ENCODE measurements at regions of chr3 and their contacts with region 1.

Region 1: DNA sequence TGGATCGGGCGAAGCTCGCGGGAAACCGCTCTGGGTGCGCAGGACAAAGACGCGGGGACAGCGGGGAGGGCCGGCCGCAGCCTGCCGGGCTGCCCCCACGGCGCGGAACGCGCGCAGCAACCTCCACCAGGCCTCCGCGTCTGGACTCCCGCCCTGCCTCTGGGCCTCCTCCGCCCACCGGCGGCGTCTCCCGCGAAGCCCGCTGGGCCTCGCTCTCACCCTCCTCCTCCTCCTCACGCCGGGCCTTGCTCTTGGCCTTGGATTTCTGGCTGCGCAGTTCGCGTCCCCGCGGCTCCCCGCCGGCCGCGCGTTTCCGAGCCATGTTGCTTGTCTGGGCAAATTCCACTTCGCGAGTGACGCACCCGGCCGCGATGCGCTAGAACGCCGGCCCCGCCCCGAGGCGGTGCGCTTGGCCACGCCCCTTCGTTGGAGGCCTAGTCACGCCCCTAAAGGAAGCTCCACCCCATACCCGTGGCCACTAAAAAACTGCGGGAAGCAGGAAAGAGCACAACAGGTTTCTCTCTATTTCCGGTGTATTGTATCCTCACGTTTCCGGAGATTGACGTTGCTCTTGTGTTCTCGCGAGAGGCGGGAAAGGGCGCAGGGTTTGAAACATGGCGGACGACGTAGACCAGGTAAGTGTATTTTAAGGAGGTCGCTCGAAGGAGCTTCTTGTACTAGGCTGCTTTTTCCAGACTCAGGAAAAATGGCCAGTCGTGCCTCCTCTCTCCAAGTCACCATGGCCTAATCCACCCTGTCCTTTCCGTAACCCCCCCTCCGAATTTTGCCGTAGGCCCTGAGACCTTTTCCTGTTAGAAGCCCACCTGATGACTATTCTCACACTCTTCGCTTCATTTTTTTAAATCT is at the starts of genes LSM3 and XPC:
- DNase-seq: peak; percentile 98
- ATAC-seq: peak; percentile 93
- H3K4me3 Mint-ChIP-seq: peak within 1 kb of the TSS; percentile 79
- H3K27ac Mint-ChIP-seq: peak within 1 kb of the TSS; percentile 94
- H3K4me1 Mint-ChIP-seq: peaks cover 64% of the 10 kb centered on the region
- H3K27me3 Mint-ChIP-seq: no peaks in the 10 kb centered on the region
- total RNA-seq, gene LSM3: 23.0 to 30.2 TPM
- total RNA-seq, gene XPC: 24.3 to 24.7 TPM

Region 2: DNA sequence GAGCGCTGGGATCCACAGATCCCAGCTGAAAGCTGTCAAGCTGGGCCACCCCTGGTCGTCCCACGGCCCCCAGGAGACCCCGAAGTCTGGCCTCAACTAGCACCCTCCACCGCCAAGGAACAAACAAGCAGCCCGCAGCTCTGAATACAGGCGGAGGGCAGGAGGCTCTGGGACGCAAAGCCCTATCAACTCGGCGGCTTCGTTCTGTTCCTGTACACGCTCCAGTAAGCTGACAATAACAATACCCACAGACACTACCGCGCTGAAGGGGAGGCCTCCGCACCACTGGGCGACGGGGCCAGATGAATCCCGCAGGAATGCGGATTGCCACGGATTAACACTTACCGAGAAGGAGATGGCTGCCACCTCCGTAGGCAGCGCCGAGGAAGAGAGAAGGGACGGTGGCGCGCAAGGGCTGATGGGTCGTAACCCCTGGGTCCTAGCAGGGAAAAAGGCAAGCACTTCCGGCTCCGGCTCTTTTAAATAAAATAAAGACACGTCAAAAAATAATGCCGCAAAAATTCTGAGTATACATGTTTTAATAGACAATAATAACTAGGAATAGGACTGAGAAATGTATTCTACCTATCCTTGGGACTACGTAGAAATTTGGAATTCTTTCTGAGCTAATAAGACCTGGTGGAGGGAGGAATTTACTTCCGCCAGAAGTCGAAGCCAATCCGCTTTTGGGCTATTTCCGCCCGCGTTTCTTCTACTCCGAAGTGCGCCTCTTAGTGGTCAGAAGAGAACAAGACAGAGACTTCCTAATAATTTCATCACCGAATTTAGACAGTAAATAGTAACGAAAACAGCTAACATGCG is 1337.1 kb before region 1 on chr3 and contains the start of gene RPL32:
- CTCF ChIA-PET with region 1: no interaction called
- POLR2A ChIA-PET with region 1: no interaction called
- intact Hi-C with region 1: loop called in 1 of 2 experiments (anchors 10 kb)
- DNase-seq: peak; percentile 92
- ATAC-seq: peak; percentile 90
- H3K4me3 Mint-ChIP-seq: peak within 1 kb of the TSS; percentile 98
- H3K27ac Mint-ChIP-seq: peak within 1 kb of the TSS; percentile 99
- H3K4me1 Mint-ChIP-seq: peaks cover 43% of the 10 kb centered on the region
- H3K27me3 Mint-ChIP-seq: no peaks in the 10 kb centered on the region
- total RNA-seq, gene RPL32: 2,842 to 4,727 TPM

Region 3: GRCh38 chr3:13895155-13896105 is 283.1 kb before region 1 on chr3:
- CTCF ChIA-PET with region 1: interaction called, 13 read pairs
- POLR2A ChIA-PET with region 1: no interaction called
- intact Hi-C with region 1: loop called (anchors 1 kb)
- DNase-seq: peak; percentile 99
- ATAC-seq: peak; percentile 100
- H3K4me3 Mint-ChIP-seq: peak overlapping the region; percentile 83
- H3K27ac Mint-ChIP-seq: peak overlapping the region; percentile 82
- H3K4me1 Mint-ChIP-seq: peaks cover 19% of the 10 kb centered on the region
- H3K27me3 Mint-ChIP-seq: no peaks in the 10 kb centered on the region

Region 4: GRCh38 chr3:14203521-14204079 is 25.1 kb after region 1 on chr3:
- CTCF ChIA-PET with region 1: interaction called, 10 read pairs
- POLR2A ChIA-PET with region 1: interaction called, 4 read pairs
- intact Hi-C with region 1: no loop called
- DNase-seq: peak; percentile 56
- ATAC-seq: peak; percentile 60
- H3K4me3 Mint-ChIP-seq: no peak overlapping the region
- H3K27ac Mint-ChIP-seq: no peak overlapping the region
- H3K4me1 Mint-ChIP-seq: peaks cover 2% of the 10 kb centered on the region
- H3K27me3 Mint-ChIP-seq: no peaks in the 10 kb centered on the region

Region 5: GRCh38 chr3:14651440-14652251 is 473.2 kb after region 1 on chr3 and contains the start of gene CCDC174:
- CTCF ChIA-PET with region 1: no interaction called
- POLR2A ChIA-PET with region 1: interaction called, 5 read pairs
- intact Hi-C with region 1: loop called (anchors 1 kb)
- DNase-seq: peak; percentile 95
- ATAC-seq: peak; percentile 99
- H3K4me3 Mint-ChIP-seq: peak within 1 kb of the TSS; percentile 93
- H3K27ac Mint-ChIP-seq: peak within 1 kb of the TSS; percentile 96
- H3K4me1 Mint-ChIP-seq: peaks cover 40% of the 10 kb centered on the region
- H3K27me3 Mint-ChIP-seq: no peaks in the 10 kb centered on the region
- total RNA-seq, gene CCDC174: 16.2 to 18.2 TPM

Region 6: GRCh38 chr3:15601397-15602145 is 1423.1 kb after region 1 on chr3 and contains the starts of genes BTD and HACL1:
- CTCF ChIA-PET with region 1: no interaction called
- POLR2A ChIA-PET with region 1: no interaction called
- intact Hi-C with region 1: loop called in 1 of 2 experiments (anchors 2 kb)
- DNase-seq: peak; percentile 99
- ATAC-seq: peak; percentile 94
- H3K4me3 Mint-ChIP-seq: peak within 1 kb of the TSS; percentile 100
- H3K27ac Mint-ChIP-seq: peak within 1 kb of the TSS; percentile 98
- H3K4me1 Mint-ChIP-seq: peaks cover 41% of the 10 kb centered on the region
- H3K27me3 Mint-ChIP-seq: no peaks in the 10 kb centered on the region
- total RNA-seq, gene BTD: 3.8 to 4.4 TPM
- total RNA-seq, gene HACL1: 22.3 to 23.2 TPM

Measured in activated CD4-positive, alpha-beta T cell treated with anti-CD3 and anti-CD28 coated beads for 36 hours (primary cell).